SK-N-SH (cell line): ENCODE measurements at regions of chr16 and their contacts with region 1.

Region 1: GRCh38 chr16:46947900-46948547 is 25.4 kb downstream of the DNAJA2 start:
- DNase-seq: peak; percentile 65
- H3K4me3 ChIP-seq: no peak overlapping the region
- H3K27ac ChIP-seq: no peak overlapping the region
- H3K4me1 ChIP-seq: no peaks in the 10 kb centered on the region
- H3K27me3 ChIP-seq: no peaks in the 10 kb centered on the region
- CTCF ChIP-seq: peak; percentile 72
- EP300 ChIP-seq: no peak
- RAD21 ChIP-seq: peak; percentile 87

Region 2: DNA sequence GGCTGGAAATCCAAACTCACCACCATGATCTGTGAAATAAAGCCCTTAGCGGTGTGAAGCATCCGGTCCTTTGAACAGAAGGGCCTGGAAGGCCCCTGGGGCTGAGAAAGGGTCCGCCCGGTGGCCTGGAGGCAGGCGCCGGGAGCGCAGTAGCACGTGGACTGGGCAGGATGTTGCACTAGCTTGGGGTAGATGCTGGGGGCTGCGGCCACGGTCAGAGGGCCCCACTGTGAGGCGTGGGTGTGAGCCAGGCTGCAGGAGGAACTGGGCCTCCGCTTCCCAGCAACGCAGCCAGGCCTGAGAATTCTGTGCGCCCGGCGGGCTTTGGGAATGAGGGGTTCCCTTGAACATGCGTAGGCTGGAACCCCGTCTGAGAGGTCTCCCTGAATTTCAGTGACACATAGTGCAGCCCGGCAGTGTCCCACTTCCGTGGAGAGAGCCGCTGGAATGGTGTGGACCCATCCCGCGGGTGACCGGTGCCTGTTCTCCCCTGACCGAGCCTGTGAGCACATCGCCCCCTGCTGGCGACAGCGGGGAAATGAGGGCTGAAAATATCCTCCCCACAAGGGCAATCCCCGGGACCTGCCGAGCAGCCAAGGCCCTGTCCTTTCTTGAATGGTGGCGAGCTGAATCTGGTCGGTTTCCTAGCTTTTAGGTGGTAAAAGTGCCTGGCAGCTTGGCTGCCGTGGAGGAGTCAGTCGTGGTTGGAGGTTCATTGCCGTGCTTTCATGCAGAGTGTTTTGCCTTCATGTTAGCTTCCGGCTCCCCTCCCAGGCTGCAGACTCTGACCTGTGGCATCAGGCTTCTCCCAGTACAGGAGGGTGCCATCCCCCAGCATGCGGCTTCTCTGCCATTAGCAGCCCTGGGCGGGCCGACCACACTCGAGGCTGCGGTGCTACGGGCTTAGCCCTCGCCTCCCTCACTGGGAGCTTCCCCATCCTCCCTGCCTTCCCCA is 18.4 kb before region 1 on chr16:
- CTCF ChIA-PET with region 1: interaction called, 15 read pairs
- POLR2A ChIA-PET with region 1: no interaction called
- DNase-seq: peak; percentile 92
- H3K4me3 ChIP-seq: no peak overlapping the region; a peak in 1 of 4 replicates
- H3K27ac ChIP-seq: no peak overlapping the region
- H3K4me1 ChIP-seq: no peaks in the 10 kb centered on the region
- H3K27me3 ChIP-seq: no peaks in the 10 kb centered on the region
- CTCF ChIP-seq: peak; percentile 91
- EP300 ChIP-seq: no peak
- RAD21 ChIP-seq: peak; percentile 65

Region 3: DNA sequence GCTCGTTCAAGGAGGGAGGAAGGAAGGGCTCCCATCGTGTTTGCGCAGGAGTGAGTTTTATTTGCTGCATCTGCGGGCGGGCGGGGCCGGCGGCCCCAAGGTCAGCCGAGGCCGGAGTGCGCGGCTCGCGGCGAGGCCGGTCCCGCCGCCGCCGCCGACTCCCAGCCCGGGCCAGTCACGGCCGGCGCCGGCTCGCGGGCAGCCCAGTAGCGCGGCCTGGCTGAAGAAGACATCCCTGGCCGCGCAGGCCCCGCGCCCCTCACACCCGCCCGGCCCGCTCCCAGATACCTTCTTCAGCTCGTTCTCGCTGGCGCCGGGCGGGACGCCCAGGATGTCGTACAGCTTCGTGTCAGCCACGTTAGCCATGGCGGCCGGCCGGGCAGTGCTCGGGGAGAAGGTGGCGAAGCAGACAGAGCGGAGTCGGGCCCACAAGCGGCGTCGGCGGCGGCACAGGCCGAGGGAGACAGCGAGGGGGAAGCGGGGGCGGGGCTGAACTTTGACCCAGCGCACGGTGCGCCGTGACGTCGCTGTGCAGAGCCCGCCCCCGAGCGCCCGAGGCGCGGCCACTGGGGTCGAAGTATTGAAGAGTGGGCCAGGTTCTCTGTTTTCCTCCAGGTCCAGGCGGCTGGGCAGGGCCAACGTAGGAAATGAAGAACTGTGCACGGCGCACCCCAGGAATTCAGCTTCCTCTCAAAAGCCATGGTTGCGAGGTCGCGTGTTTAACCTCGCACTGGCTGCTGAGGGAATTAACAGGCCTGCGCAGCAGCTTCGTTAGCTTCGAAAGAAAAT is 25.4 kb after region 1 on chr16 and contains the start of gene DNAJA2:
- CTCF ChIA-PET with region 1: interaction called, 16 read pairs
- POLR2A ChIA-PET with region 1: no interaction called
- DNase-seq: peak; percentile 96
- H3K4me3 ChIP-seq: peak within 1 kb of the TSS; percentile 91 to 95
- H3K27ac ChIP-seq: peak within 1 kb of the TSS; percentile 86 to 98
- H3K4me1 ChIP-seq: peaks cover 10 to 13% of the 10 kb centered on the region in 2 experiments; a peak in 3 of 4 replicates
- H3K27me3 ChIP-seq: no peaks in the 10 kb centered on the region
- CTCF ChIP-seq: no peak
- EP300 ChIP-seq: peak in 1 of 2 experiments; percentile 10; a peak in 1 of 4 replicates
- RAD21 ChIP-seq: no peak
- polyA plus RNA-seq, gene DNAJA2: 9.7 and 12.8 TPM in 2 replicates

Region 4: GRCh38 chr16:47018223-47018891 is 70.3 kb after region 1 on chr16:
- CTCF ChIA-PET with region 1: interaction called, 17 read pairs
- POLR2A ChIA-PET with region 1: no interaction called
- DNase-seq: peak; percentile 76
- H3K4me3 ChIP-seq: no peak overlapping the region
- H3K27ac ChIP-seq: no peak overlapping the region
- H3K4me1 ChIP-seq: no peaks in the 10 kb centered on the region
- H3K27me3 ChIP-seq: no peaks in the 10 kb centered on the region
- CTCF ChIP-seq: peak; percentile 43
- EP300 ChIP-seq: no peak
- RAD21 ChIP-seq: peak; percentile 73